ENCODE measurements at regions of chr17 and their contacts with region 1.

Region 1: GRCh38 chr17:81484195-81484979 is 28.2 kb downstream of the ACTG1 start:
- DNase-seq: peak; percentile 90
- H3K4me3 ChIP-seq: peak overlapping the region; percentile 16 to 52 (median 44)
- H3K27ac ChIP-seq: no peak overlapping the region
- H3K4me1 ChIP-seq: peaks cover 20 to 44% (median 38%) of the 10 kb centered on the region in 4 donors
- H3K27me3 ChIP-seq: peaks cover 29% of the 10 kb centered on the region
- CTCF ChIP-seq: peak; percentile 78 to 99 (median 97)
- EP300 ChIP-seq: no peak
- POLR2A ChIP-seq: no peak

Region 2: GRCh38 chr17:81253358-81254131 is 230.8 kb before region 1 on chr17:
- in situ Hi-C with region 1: loop called in 3 of 4 experiments (anchors 10 to 25 kb)
- intact Hi-C with region 1: loop called (anchors 5 kb)
- DNase-seq: peak; percentile 40
- H3K4me3 ChIP-seq: no peak overlapping the region
- H3K27ac ChIP-seq: no peak overlapping the region
- H3K4me1 ChIP-seq: peaks cover 15 to 56% (median 45%) of the 10 kb centered on the region in 4 donors
- H3K27me3 ChIP-seq: no peaks in the 10 kb centered on the region
- CTCF ChIP-seq: peak; percentile 78 to 97 (median 82)
- EP300 ChIP-seq: no peak
- POLR2A ChIP-seq: no peak

Region 3: GRCh38 chr17:81294856-81295680 is 189.3 kb before region 1 on chr17 and contains the start of gene SLC38A10:
- in situ Hi-C with region 1: loop called in 1 of 4 experiments (anchors 25 kb)
- intact Hi-C with region 1: loop called (anchors 5 kb)
- DNase-seq: peak; percentile 95
- H3K4me3 ChIP-seq: peak within 1 kb of the TSS; percentile 78 to 95 (median 86)
- H3K27ac ChIP-seq: peak within 1 kb of the TSS; percentile 93 to 98 (median 94)
- H3K4me1 ChIP-seq: peaks cover 8 to 42% (median 35%) of the 10 kb centered on the region in 4 donors
- H3K27me3 ChIP-seq: no peaks in the 10 kb centered on the region
- CTCF ChIP-seq: no peak
- EP300 ChIP-seq: no peak
- POLR2A ChIP-seq: peak; percentile 98
- total RNA-seq, gene SLC38A10: 94.9 to 113 (median 98.9) TPM

Region 4: GRCh38 chr17:81394921-81395599 is 89.3 kb before region 1 on chr17 and contains the start of gene BAHCC1:
- in situ Hi-C with region 1: loop called in 1 of 4 experiments (anchors 25 kb)
- intact Hi-C with region 1: loop called (anchors 2 kb)
- DNase-seq: peak; percentile 100
- H3K4me3 ChIP-seq: peak within 1 kb of the TSS; percentile 54 to 88 (median 82)
- H3K27ac ChIP-seq: peak within 1 kb of the TSS; percentile 97 to 99 (median 98)
- H3K4me1 ChIP-seq: peaks cover 19 to 42% (median 33%) of the 10 kb centered on the region in 4 donors
- H3K27me3 ChIP-seq: peaks cover 13% of the 10 kb centered on the region
- CTCF ChIP-seq: no peak
- EP300 ChIP-seq: no peak
- POLR2A ChIP-seq: peak; percentile 98
- total RNA-seq, gene BAHCC1: 8.7 to 133 (median 12.4) TPM

Region 5: DNA sequence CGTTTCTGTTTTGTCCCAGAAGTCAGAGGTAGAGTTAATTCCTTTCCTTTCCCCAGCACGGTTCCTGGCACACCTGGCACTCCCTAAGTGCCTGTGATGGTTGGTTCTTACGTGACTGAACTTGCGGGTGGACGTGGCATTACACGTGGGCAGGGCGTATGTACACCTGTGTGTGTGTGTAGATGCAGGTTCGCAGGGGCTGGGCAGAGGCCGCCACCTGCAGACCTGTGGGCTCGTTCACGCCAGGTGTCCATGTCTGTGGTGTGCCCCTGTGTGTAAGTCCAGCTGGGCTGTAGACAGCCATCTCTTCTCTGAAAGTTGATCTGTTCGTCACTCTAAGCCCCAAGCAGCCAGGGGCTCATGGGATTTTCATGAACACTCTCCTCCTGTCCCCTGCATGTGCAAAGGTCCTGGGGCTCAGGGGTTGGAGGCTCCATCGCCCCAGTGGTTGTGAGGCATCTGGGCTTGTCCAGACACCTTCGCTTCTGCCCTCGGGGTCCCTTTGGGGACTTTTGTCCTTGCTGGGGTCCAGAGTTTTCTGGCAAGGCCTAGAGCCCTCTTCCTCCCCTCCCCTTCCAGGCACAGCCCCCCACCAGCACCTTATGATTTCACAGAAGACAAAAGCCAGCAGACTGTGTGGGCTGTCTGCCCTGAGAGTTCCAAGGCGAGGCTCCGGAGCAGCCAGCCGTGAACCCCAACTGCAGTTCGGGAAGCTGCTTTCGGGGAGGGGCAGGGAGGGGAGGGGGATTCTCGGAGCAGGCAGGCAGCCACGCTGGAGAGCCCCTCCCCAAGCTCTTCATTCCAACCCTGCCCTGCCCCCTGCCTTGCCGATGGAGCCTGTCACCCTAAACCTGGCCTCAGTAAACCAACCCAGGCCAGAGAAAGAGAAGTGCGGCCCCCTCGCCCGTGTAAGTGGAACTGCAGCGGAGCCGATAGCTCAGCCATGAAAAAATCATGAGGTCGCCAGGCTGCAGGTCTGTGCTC is 38.4 kb after region 1 on chr17:
- in situ Hi-C with region 1: no loop called
- intact Hi-C with region 1: loop called (anchors 1 kb)
- DNase-seq: no peak
- H3K4me3 ChIP-seq: no peak overlapping the region
- H3K27ac ChIP-seq: no peak overlapping the region
- H3K4me1 ChIP-seq: peaks cover 23 to 35% (median 26%) of the 10 kb centered on the region in 4 donors
- H3K27me3 ChIP-seq: peaks cover 52% of the 10 kb centered on the region
- CTCF ChIP-seq: no peak
- EP300 ChIP-seq: no peak
- POLR2A ChIP-seq: no peak

Region 6: DNA sequence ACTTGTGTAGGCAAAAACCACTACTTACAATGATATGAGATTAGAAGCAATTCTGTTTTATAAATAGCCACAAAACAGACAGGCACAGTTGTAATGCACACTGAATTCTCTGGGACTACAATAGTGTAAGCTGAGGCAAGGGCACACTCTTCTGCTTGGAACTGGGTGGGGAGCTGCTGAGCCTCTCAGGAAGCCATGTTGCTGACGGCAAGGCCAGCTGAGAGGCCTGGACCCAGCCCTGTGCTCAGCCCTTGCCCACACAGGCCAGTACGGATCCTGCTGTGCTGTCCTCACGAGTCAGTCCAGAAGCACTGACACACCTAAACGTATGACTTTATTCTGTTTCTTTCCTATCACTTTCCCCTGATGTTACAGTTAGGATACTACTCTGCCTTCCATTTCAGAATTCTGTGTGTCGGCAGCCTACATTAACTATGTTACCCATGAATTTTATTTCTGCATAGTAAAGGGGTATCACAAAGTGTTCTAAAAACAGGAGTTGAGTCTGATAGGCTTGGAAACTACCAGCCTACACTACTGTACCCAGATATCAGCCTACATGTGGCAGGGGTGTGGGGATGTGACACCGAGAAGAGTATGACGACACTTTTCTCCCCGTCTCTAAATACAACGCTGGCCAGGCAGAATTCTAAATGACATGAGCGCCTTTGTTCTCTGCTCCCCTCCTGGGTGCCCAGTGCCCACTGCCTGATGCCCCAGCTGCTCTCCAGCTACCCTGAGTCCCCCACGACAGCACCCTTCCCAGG is 108.9 kb after region 1 on chr17:
- in situ Hi-C with region 1: no loop called
- intact Hi-C with region 1: no loop called
- DNase-seq: no peak
- H3K4me3 ChIP-seq: no peak overlapping the region
- H3K27ac ChIP-seq: no peak overlapping the region
- H3K4me1 ChIP-seq: no peaks in the 10 kb centered on the region
- H3K27me3 ChIP-seq: no peaks in the 10 kb centered on the region
- CTCF ChIP-seq: no peak
- EP300 ChIP-seq: no peak
- POLR2A ChIP-seq: no peak

Region 7: GRCh38 chr17:82257473-82257872 is 773.1 kb after region 1 on chr17:
- in situ Hi-C with region 1: no loop called
- intact Hi-C with region 1: no loop called
- DNase-seq: no peak
- H3K4me3 ChIP-seq: no peak overlapping the region
- H3K27ac ChIP-seq: peak overlapping the region in 2 of 4 donors; percentile 7 to 37
- H3K4me1 ChIP-seq: no peaks in the 10 kb centered on the region
- H3K27me3 ChIP-seq: no peaks in the 10 kb centered on the region
- CTCF ChIP-seq: no peak
- EP300 ChIP-seq: no peak
- POLR2A ChIP-seq: no peak